ENCODE measurements at regions of chr12 and their contacts with region 1.

Region 1: DNA sequence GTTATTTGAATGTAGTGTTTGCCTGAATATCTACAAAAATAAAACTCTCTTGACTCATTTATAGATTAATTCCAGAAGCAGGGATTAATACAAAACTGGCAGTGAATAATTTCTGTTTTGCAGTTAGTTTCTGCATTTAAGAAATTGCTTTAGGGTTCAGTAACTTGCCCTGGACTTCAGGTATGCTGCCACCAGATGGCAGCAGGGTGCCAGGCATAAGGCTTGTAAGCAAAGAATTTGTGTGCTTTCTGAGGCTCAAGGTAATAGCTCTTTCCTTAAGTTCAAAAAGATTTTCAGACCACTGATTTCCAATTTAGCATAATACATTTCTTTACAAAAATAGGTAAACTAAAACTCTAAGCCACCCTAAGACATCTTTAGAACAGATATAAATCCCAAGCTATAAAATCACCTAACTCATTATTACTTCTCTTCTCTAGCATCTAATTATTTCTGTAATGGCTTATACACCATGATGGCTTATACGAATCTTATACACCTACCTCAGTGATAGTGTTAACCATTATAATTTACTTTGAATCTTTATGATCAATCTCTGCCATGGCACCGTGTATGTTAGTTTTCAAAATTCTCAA is 398.3 kb downstream of the APAF1 start:
- DNase-seq: peak; percentile 14
- H3K4me3 Mint-ChIP-seq: no peak overlapping the region
- H3K27ac Mint-ChIP-seq: no peak overlapping the region
- H3K4me1 Mint-ChIP-seq: no peaks in the 10 kb centered on the region
- H3K27me3 Mint-ChIP-seq: peaks cover 7% of the 10 kb centered on the region

Region 2: GRCh38 chr12:98644711-98645402 is 398.6 kb before region 1 on chr12 and contains the starts of genes APAF1 and IKBIP:
- intact Hi-C with region 1: no loop called
- DNase-seq: peak; percentile 96
- H3K4me3 Mint-ChIP-seq: peak within 1 kb of the TSS; percentile 92
- H3K27ac Mint-ChIP-seq: peak within 1 kb of the TSS; percentile 95
- H3K4me1 Mint-ChIP-seq: peaks cover 49% of the 10 kb centered on the region
- H3K27me3 Mint-ChIP-seq: no peaks in the 10 kb centered on the region
- total RNA-seq, gene APAF1: 21.2 and 23.9 TPM in 2 replicates
- total RNA-seq, gene IKBIP: 35.5 and 36.5 TPM in 2 replicates

Region 3: DNA sequence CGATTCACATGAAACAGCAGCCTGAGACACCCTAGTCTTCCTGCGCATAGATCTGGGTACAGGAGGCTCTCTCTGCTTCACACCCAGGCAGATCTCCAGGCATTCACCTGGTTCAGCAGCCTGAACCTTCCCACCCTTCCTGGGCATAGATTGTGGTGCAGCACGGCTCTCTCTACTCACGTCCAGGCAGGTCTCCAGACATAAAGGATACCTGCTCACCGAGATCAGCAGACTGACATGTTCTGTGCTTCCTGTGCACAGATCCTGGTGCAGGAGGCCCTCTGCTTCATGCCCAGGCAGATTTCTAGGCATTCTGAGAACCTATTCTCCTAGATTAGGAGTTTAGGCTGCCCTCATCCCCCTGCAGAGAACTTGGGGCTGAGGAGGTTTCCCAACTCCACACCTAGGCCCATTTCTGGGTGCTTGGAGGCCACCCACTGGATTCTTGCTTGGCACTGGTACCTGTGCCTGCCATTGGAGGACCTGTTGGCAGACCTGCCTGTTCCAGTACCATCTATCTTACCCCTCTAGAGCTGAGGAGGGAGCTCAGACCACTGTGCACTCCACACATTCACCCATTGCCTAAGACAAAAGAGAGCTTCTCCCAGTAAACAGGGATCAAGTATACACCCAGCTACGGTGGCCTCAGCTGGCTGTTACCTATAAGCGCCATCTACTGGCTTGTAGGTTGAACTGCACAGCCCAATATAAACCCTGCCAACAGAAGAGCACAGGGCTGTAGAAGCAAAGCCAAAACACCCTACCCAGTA is 576.2 kb after region 1 on chr12:
- intact Hi-C with region 1: loop called (anchors 1 kb)
- DNase-seq: no peak
- H3K4me3 Mint-ChIP-seq: no peak overlapping the region
- H3K27ac Mint-ChIP-seq: no peak overlapping the region
- H3K4me1 Mint-ChIP-seq: no peaks in the 10 kb centered on the region
- H3K27me3 Mint-ChIP-seq: no peaks in the 10 kb centered on the region

Region 4: DNA sequence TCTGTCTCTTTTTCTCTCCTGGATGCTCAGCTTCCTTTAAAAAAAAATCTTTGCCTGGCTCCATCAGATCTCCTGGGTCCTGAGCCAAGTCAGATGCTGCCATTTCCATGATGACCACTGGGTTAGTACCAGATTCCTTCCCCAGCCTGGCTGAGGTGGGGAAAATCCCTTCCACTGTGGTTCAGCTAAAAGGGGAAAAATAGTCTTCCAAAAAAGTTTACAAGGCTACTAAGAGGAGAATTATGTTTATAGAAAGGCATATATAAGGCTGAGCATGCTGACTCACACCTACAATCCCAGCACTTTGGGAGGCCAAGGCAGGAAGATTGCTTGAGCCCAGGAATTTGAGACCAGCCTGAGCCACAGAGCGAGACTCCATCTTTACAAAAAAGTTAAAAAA is 1501.7 kb after region 1 on chr12:
- intact Hi-C with region 1: loop called (anchors 10 kb)
- DNase-seq: no peak
- H3K4me3 Mint-ChIP-seq: no peak overlapping the region
- H3K27ac Mint-ChIP-seq: no peak overlapping the region
- H3K4me1 Mint-ChIP-seq: no peaks in the 10 kb centered on the region
- H3K27me3 Mint-ChIP-seq: no peaks in the 10 kb centered on the region